Endothelial cell of umbilical vein (primary cell): ENCODE measurements at regions of chr7 and their contacts with region 1.

Region 1: GRCh38 chr7:94810496-94810895 is 96.9 kb upstream of the PPP1R9A start:
- DNase-seq: no peak
- H3K4me3 ChIP-seq: no peak overlapping the region
- H3K27ac ChIP-seq: no peak overlapping the region
- H3K4me1 ChIP-seq: no peaks in the 10 kb centered on the region
- H3K27me3 ChIP-seq: no peaks in the 10 kb centered on the region
- CTCF ChIP-seq: no peak
- POLR2A ChIP-seq: no peak

Region 2: DNA sequence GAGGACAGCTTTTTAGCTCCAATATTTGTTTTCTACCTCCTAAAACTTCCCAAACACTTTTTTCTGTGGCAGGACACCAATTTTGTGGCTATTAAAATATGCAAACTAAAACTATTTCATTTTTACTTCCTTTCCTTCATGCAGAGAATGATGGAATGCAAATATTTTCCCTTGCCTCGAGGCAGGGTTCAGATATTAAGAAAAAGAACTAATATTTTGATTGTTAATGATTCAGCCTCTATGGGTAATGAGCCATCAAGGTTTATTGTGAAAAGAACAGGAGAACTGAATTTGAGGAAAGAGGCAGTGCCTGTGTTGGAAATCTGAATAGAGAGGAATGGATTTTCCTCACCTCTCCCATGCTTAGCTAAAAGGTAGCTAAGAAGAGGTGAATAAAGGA is 344.0 kb before region 1 on chr7:
- CTCF ChIA-PET with region 1: no interaction called
- POLR2A ChIA-PET with region 1: no interaction called
- dilution Hi-C with region 1: no loop called
- intact Hi-C with region 1: loop called (anchors 10 kb)
- DNase-seq: no peak
- H3K4me3 ChIP-seq: no peak overlapping the region
- H3K27ac ChIP-seq: no peak overlapping the region
- H3K4me1 ChIP-seq: no peaks in the 10 kb centered on the region
- H3K27me3 ChIP-seq: no peaks in the 10 kb centered on the region
- CTCF ChIP-seq: no peak
- POLR2A ChIP-seq: no peak